Activated B cell treated with CpG ODN at 0.5 μM for 24 hours (primary cell): ENCODE measurements at regions of chr19 and their contacts with region 1.

Region 1: GRCh38 chr19:47483800-47484690 is at the start of gene KPTN:
- DNase-seq: peak; percentile 85
- ATAC-seq: peak; percentile 87
- H3K4me3 Mint-ChIP-seq: peak within 1 kb of the TSS; percentile 98
- H3K27ac Mint-ChIP-seq: peak within 1 kb of the TSS; percentile 99
- H3K4me1 Mint-ChIP-seq: peaks cover 42% of the 10 kb centered on the region
- H3K27me3 Mint-ChIP-seq: no peaks in the 10 kb centered on the region
- CTCF ChIP-seq: no peak
- total RNA-seq, gene KPTN: 8.0 and 8.7 TPM in 2 replicates

Region 2: GRCh38 chr19:47447470-47448359 is 36.3 kb before region 1 on chr19:
- CTCF ChIA-PET with region 1: no interaction called
- POLR2A ChIA-PET with region 1: no interaction called
- intact Hi-C with region 1: loop called (anchors 2 kb)
- DNase-seq: no peak
- ATAC-seq: peak; percentile 29
- H3K4me3 Mint-ChIP-seq: no peak overlapping the region
- H3K27ac Mint-ChIP-seq: no peak overlapping the region
- H3K4me1 Mint-ChIP-seq: peaks cover 31% of the 10 kb centered on the region
- H3K27me3 Mint-ChIP-seq: peaks cover 67% of the 10 kb centered on the region
- CTCF ChIP-seq: no peak

Region 3: DNA sequence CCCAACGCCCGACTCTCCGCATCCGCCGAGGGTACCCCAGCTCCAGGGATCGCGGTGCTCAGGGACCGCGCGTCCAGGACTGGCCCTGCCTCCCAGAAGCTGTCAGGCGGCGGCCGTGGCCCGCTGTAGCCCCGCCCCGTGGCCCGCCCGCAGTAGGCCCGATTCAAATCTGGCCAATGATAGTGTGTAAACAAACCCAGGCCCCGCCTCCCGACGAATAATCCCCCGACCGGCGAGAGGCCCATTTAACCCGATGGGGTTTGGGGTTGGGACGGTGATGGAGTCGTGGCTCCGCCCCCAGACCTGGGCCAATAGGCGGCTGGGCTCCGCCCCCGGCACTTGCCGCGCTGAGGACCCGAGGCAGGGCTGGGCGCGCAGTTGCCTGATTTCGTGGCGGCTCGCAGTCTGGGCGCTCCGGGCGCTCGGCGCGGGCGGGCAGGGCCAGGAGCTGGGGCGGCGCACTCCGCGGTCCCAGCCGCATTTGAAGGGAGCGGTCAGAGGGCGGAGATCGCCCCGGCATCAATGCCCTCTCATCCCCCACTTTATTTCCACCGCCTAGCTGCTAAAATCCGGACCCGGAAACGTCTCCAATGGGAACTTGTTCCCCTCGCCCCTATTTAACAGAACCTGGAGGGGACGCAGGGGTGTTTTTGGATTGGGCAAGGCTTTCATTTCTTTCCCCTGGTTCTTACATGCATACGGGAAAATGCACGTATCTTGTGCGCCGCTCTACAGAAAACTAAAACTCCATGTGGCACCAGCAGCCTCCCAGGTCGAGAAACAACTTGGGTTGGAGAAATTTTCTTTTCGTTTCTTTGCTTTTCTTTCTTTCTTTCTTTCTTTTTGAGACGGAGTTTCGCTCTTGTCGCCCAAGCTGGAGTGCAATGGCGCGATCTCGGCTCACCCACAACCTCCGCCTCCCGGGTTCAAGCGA is 116.5 kb after region 1 on chr19:
- CTCF ChIA-PET with region 1: no interaction called
- POLR2A ChIA-PET with region 1: interaction called, 5 read pairs
- intact Hi-C with region 1: loop called (anchors 2 kb)
- DNase-seq: peak; percentile 92
- ATAC-seq: peak; percentile 97
- H3K4me3 Mint-ChIP-seq: peak overlapping the region; percentile 84
- H3K27ac Mint-ChIP-seq: peak overlapping the region; percentile 76
- H3K4me1 Mint-ChIP-seq: peaks cover 10% of the 10 kb centered on the region
- H3K27me3 Mint-ChIP-seq: peaks cover 9% of the 10 kb centered on the region
- CTCF ChIP-seq: no peak

Region 4: DNA sequence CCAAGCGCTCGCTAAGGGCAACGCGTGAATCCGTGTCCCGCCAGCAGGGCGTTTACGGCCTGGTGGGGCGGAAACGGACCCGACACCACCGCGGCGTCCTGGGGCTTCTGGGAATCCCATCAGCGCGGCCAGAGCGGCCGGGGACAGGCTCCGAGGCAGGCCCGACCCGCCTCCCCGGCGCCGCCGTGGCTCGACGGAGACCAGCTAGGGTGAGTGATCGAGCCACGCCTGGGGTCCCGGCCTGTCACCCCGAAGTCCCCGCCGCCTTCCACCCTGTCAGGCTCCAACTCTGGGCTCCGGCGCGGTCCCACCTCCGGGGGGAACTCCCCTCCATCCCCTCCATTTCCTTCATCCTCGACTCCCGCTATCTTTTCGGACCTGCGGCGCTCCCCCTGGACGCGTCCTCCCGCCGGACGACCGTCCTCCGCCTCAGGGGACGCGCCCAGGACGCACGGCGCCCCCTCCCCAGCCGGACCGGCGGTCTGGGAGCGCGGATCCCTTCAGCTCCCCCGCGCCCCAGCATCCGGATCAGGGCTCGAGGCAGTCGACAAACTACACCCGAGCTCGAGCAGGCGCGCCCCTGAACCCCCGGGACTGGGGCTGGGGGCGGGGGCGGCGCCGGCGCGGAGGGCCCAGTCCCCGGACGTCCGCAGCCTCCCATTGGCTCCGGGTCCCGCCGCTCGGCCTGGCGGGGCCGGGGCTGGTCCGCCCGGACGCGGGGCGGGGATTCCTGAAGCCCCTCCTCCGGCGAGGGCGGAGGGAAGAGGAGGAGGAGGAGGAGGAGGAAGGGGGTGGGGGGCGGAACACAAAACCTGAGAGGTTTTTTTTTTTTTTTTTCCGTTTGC is 124.3 kb after region 1 on chr19:
- CTCF ChIA-PET with region 1: no interaction called
- POLR2A ChIA-PET with region 1: interaction called, 7 read pairs
- intact Hi-C with region 1: loop called (anchors 1 kb)
- DNase-seq: peak; percentile 99
- ATAC-seq: peak; percentile 90
- H3K4me3 Mint-ChIP-seq: peak overlapping the region; percentile 84
- H3K27ac Mint-ChIP-seq: peak overlapping the region; percentile 71
- H3K4me1 Mint-ChIP-seq: peaks cover 25% of the 10 kb centered on the region
- H3K27me3 Mint-ChIP-seq: no peaks in the 10 kb centered on the region
- CTCF ChIP-seq: no peak